IMR-90 (cell line): ENCODE measurements at regions of chr3 and their contacts with region 1.

Region 1: DNA sequence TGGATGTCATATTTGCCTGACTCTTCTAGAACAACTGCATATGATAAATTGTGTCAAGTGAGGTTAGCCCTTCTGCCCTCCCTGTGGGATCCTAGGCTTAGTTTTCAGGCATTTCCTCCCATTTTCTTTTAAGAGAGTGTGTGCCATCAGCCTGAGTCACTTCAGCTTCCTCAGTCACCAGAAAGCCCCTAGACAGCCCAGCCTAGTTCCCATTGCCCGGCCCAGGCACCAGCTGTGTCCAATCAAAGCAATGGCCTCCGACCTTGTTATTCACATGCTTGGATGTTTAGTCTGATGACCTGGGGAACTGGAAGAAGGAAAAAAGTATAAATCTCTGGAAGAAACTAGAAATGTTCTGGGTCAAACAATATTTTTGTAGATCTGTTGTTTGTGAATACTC is 221.9 kb upstream of the LRIG1 start:
- DNase-seq: peak; percentile 95
- ATAC-seq: peak; percentile 93
- H3K4me3 ChIP-seq: no peak overlapping the region
- H3K27ac ChIP-seq: no peak overlapping the region
- H3K4me1 ChIP-seq: peaks cover 9% of the 10 kb centered on the region
- H3K27me3 ChIP-seq: no peaks in the 10 kb centered on the region
- CTCF ChIP-seq: no peak
- POLR2A ChIP-seq: no peak
- RAD21 ChIP-seq: no peak

Region 2: GRCh38 chr3:65793495-65794199 is 929.0 kb before region 1 on chr3:
- CTCF ChIA-PET with region 1: no interaction called
- POLR2A ChIA-PET with region 1: no interaction called
- dilution Hi-C with region 1: no loop called
- in situ Hi-C with region 1: no loop called
- intact Hi-C with region 1: no loop called
- DNase-seq: peak; percentile 41
- ATAC-seq: 0 out of 2 replicates have a peak, but pooled peaks have one; percentile 11
- H3K4me3 ChIP-seq: no peak overlapping the region
- H3K27ac ChIP-seq: no peak overlapping the region
- H3K4me1 ChIP-seq: peaks cover 4% of the 10 kb centered on the region
- H3K27me3 ChIP-seq: no peaks in the 10 kb centered on the region
- CTCF ChIP-seq: no peak
- POLR2A ChIP-seq: no peak
- RAD21 ChIP-seq: no peak

Region 3: GRCh38 chr3:66483406-66483906 is 239.2 kb before region 1 on chr3:
- CTCF ChIA-PET with region 1: no interaction called
- POLR2A ChIA-PET with region 1: no interaction called
- dilution Hi-C with region 1: no loop called
- in situ Hi-C with region 1: no loop called
- intact Hi-C with region 1: no loop called
- DNase-seq: peak; percentile 54
- ATAC-seq: no peak
- H3K4me3 ChIP-seq: no peak overlapping the region
- H3K27ac ChIP-seq: peak overlapping the region; percentile 12; the same call in 1 of the 2 replicates
- H3K4me1 ChIP-seq: peaks cover 38% of the 10 kb centered on the region
- H3K27me3 ChIP-seq: no peaks in the 10 kb centered on the region
- CTCF ChIP-seq: 0 out of 2 replicates have a peak, but pooled peaks have one; percentile 4
- POLR2A ChIP-seq: no peak
- RAD21 ChIP-seq: no peak

Region 4: GRCh38 chr3:66748175-66748876 is 25.7 kb after region 1 on chr3:
- CTCF ChIA-PET with region 1: no interaction called
- POLR2A ChIA-PET with region 1: interaction called, 19 read pairs
- dilution Hi-C with region 1: no loop called
- in situ Hi-C with region 1: no loop called
- intact Hi-C with region 1: no loop called
- DNase-seq: no peak
- ATAC-seq: peak; percentile 74; the same call in 1 of the 2 replicates
- H3K4me3 ChIP-seq: no peak overlapping the region
- H3K27ac ChIP-seq: no peak overlapping the region
- H3K4me1 ChIP-seq: peaks cover 9% of the 10 kb centered on the region
- H3K27me3 ChIP-seq: no peaks in the 10 kb centered on the region
- CTCF ChIP-seq: no peak
- POLR2A ChIP-seq: no peak
- RAD21 ChIP-seq: no peak

Region 5: GRCh38 chr3:67617518-67617917 is 894.8 kb after region 1 on chr3:
- CTCF ChIA-PET with region 1: no interaction called
- POLR2A ChIA-PET with region 1: no interaction called
- dilution Hi-C with region 1: no loop called
- in situ Hi-C with region 1: no loop called
- intact Hi-C with region 1: no loop called
- DNase-seq: no peak
- ATAC-seq: no peak
- H3K4me3 ChIP-seq: no peak overlapping the region
- H3K27ac ChIP-seq: no peak overlapping the region
- H3K4me1 ChIP-seq: no peaks in the 10 kb centered on the region
- H3K27me3 ChIP-seq: no peaks in the 10 kb centered on the region
- CTCF ChIP-seq: no peak
- POLR2A ChIP-seq: no peak
- RAD21 ChIP-seq: no peak